ENCODE measurements at regions of chr5 and their contacts with region 1.

Region 1: DNA sequence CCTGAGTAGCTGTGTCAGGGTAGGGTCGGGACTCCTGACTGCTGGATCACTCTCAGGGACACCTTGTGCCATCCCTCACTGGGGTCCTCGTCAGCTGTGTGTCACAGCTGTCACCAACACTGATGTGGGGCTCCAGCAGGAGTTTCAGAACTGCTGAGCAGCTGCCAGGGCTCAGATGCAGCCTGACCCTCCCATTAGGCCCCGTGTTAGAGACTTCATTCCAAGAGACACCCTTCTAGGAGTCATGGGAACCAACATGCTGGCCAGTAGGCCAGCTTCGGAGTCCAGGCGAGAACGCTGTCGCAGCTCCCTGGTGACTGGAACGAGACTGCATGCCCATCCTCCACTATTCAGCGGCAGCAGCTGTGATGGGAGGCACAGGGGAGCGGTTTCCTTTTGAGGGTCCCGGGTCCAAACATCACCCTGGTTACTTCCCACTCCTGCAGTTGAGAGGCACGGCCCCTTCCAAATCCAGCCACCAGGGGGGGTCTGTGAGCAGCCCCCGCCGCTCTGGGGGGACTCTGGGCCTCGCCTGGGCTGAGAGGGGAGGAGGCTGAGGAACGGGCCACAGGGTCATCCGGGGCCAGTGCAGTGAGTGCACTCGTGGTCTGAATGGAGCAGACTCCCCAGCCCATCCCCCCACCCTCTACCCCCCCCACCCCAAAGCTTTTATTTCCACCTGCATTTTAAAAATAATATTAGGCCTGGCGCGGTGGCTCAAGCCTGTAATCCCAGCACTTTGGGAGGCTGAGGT is 12.6 kb upstream of the TCF7 start:
- DNase-seq: peak; percentile 76
- ATAC-seq: peak; percentile 38
- H3K4me3 Mint-ChIP-seq: peak overlapping the region; percentile 32
- H3K27ac Mint-ChIP-seq: peak overlapping the region; percentile 99
- H3K4me1 Mint-ChIP-seq: peaks cover 56% of the 10 kb centered on the region
- H3K27me3 Mint-ChIP-seq: no peaks in the 10 kb centered on the region
- CTCF ChIP-seq: no peak

Region 2: DNA sequence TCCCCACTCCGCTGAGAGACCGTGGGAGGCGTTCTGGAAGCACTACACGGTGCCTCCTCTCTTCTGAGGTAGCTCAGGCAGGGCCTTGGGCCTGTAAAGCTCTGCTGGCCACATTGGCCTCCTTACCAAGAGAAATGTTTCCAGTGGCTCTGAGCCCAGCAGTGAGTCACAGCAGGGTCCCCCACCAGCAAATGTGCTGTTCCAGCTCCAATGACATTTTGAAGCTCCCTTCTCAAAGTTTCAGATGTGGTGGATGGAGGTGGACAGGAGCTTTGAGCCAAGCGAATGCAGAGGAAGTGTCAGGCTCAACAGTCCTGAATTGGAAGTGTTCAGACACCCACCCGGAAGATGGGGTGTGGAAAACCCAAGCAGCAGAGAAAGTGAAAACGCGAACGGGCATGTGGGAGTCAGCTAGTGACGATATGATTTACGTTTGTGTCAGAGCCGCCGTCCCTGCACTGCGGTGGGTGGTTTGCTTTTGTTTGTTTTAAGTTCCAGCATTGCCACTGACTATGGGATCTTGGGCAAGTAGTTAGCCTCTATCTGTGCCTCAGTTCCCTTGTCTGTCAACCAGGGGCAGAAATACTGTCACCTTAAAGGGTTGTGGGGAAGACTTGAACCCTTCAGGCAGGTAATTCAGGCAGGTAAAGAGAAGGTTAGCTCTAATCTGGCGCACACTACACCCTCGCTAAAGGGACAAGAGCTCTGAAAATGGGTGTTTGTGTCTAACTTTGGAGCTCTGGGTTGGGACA is 171.6 kb before region 1 on chr5:
- CTCF ChIA-PET with region 1: no interaction called
- POLR2A ChIA-PET with region 1: interaction called, 3 read pairs
- intact Hi-C with region 1: loop called (anchors 5 kb)
- DNase-seq: peak; percentile 35
- ATAC-seq: peak; percentile 6
- H3K4me3 Mint-ChIP-seq: peak overlapping the region; percentile 72
- H3K27ac Mint-ChIP-seq: peak overlapping the region; percentile 96
- H3K4me1 Mint-ChIP-seq: peaks cover 86% of the 10 kb centered on the region
- H3K27me3 Mint-ChIP-seq: no peaks in the 10 kb centered on the region
- CTCF ChIP-seq: no peak

Region 3: GRCh38 chr5:134041570-134042411 is 60.1 kb before region 1 on chr5:
- CTCF ChIA-PET with region 1: no interaction called
- POLR2A ChIA-PET with region 1: interaction called, 28 read pairs
- intact Hi-C with region 1: loop called (anchors 1 kb)
- DNase-seq: no peak
- ATAC-seq: no peak
- H3K4me3 Mint-ChIP-seq: no peak overlapping the region
- H3K27ac Mint-ChIP-seq: no peak overlapping the region
- H3K4me1 Mint-ChIP-seq: peaks cover 4% of the 10 kb centered on the region
- H3K27me3 Mint-ChIP-seq: no peaks in the 10 kb centered on the region
- CTCF ChIP-seq: no peak

Region 4: GRCh38 chr5:134113902-134114875 is 12.3 kb after region 1 on chr5 and contains the start of gene TCF7:
- CTCF ChIA-PET with region 1: interaction called, 51 read pairs
- POLR2A ChIA-PET with region 1: interaction called, 61 read pairs
- intact Hi-C with region 1: loop called (anchors 1 kb)
- DNase-seq: peak; percentile 61
- ATAC-seq: peak; percentile 91
- H3K4me3 Mint-ChIP-seq: peak within 1 kb of the TSS; percentile 90
- H3K27ac Mint-ChIP-seq: peak within 1 kb of the TSS; percentile 81
- H3K4me1 Mint-ChIP-seq: peaks cover 24% of the 10 kb centered on the region
- H3K27me3 Mint-ChIP-seq: peaks cover 10% of the 10 kb centered on the region
- CTCF ChIP-seq: no peak
- total RNA-seq, gene TCF7: 13.2 and 15.8 TPM in 2 replicates

Region 5: DNA sequence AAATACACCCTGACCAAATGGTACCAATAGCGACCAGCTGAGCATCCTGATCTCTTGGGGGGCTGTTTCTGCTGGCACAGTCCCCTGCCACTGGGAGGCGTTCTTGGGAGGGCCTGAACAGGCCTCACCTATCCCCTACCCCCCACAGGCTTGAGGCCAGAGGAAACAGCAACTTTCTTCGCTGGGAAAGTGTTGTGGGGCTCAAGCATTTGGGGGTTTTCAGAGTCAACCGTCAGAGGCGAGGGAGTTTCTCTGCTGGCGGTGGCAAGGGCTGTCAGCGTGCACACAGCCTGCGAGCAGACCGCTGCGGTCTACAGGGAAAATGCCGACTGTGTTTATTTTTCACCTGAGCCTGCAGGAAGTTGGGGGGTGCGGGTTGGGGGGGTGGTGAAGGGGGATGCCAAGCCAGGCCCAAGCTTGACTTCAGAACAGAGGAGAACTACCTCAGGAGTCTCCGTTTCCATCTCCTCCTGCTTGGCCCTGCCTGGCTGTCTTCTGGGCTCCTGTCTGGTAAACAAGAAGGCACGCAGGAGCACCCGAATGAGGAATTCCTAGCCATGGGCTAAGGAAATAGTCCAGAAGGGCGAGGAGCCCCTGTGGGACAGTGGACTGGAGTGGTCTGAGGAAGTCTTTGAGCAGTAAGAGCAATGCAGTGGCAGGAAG is 30.6 kb after region 1 on chr5:
- CTCF ChIA-PET with region 1: interaction called, 6 read pairs
- POLR2A ChIA-PET with region 1: interaction called, 71 read pairs
- intact Hi-C with region 1: loop called (anchors 1 kb)
- DNase-seq: peak; percentile 27
- ATAC-seq: peak; percentile 79
- H3K4me3 Mint-ChIP-seq: peak overlapping the region; percentile 35
- H3K27ac Mint-ChIP-seq: peak overlapping the region; percentile 88
- H3K4me1 Mint-ChIP-seq: peaks cover 56% of the 10 kb centered on the region
- H3K27me3 Mint-ChIP-seq: no peaks in the 10 kb centered on the region
- CTCF ChIP-seq: no peak

Region 6: GRCh38 chr5:134145779-134146581 is 44.1 kb after region 1 on chr5:
- CTCF ChIA-PET with region 1: interaction called, 15 read pairs
- POLR2A ChIA-PET with region 1: interaction called, 71 read pairs
- intact Hi-C with region 1: loop called (anchors 1 kb)
- DNase-seq: peak; percentile 76
- ATAC-seq: peak; percentile 96
- H3K4me3 Mint-ChIP-seq: no peak overlapping the region
- H3K27ac Mint-ChIP-seq: peak overlapping the region; percentile 7
- H3K4me1 Mint-ChIP-seq: peaks cover 10% of the 10 kb centered on the region
- H3K27me3 Mint-ChIP-seq: no peaks in the 10 kb centered on the region
- CTCF ChIP-seq: peak; percentile 80

Measured in activated B cell treated with CpG ODN at 0.5 μM for 24 hours (primary cell).